Activated T-helper 1 cell treated with anti-CD3 and anti-CD28 coated beads, Interleukin-12 subunit alpha, Interleukin-12 subunit beta, Interleukin-2, Interleukin-4 antibody, amounts not matched to agents 30 ng/mL and 10 ng/mL and 1 ng/mL, durations not matched to agents 14 hours and 24 hours and 36 hours (primary cell): ENCODE measurements at regions of chr15 and their contacts with region 1.

Region 1: GRCh38 chr15:50613600-50613999 is 67.1 kb upstream of the USP50 start:
- DNase-seq: no peak
- H3K4me3 Mint-ChIP-seq: no peak overlapping the region
- H3K27ac Mint-ChIP-seq: no peak overlapping the region
- H3K4me1 Mint-ChIP-seq: no peaks in the 10 kb centered on the region
- H3K27me3 Mint-ChIP-seq: no peaks in the 10 kb centered on the region

Region 2: DNA sequence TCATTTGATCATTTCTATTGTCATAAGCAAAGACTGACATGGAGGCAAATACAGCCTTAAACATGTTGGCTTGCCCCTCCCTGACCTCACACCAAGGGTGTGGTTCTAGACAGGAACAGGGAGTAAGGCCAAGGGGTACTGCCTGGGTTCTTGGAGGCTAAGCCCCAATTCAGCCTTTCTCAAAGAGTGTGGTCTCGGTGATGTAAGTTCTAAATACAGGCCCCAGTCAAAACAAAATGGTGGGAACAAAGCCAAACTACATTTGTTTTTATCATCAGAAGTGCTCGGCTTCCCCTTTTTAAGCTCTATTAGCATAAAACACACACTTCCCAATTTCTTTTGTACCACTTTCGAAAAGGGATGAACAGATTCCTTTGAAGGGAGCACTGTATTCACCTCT is 624.1 kb before region 1 on chr15:
- intact Hi-C with region 1: no loop called
- DNase-seq: no peak
- H3K4me3 Mint-ChIP-seq: no peak overlapping the region
- H3K27ac Mint-ChIP-seq: no peak overlapping the region
- H3K4me1 Mint-ChIP-seq: no peaks in the 10 kb centered on the region
- H3K27me3 Mint-ChIP-seq: peaks cover under 1% of the 10 kb centered on the region

Region 3: DNA sequence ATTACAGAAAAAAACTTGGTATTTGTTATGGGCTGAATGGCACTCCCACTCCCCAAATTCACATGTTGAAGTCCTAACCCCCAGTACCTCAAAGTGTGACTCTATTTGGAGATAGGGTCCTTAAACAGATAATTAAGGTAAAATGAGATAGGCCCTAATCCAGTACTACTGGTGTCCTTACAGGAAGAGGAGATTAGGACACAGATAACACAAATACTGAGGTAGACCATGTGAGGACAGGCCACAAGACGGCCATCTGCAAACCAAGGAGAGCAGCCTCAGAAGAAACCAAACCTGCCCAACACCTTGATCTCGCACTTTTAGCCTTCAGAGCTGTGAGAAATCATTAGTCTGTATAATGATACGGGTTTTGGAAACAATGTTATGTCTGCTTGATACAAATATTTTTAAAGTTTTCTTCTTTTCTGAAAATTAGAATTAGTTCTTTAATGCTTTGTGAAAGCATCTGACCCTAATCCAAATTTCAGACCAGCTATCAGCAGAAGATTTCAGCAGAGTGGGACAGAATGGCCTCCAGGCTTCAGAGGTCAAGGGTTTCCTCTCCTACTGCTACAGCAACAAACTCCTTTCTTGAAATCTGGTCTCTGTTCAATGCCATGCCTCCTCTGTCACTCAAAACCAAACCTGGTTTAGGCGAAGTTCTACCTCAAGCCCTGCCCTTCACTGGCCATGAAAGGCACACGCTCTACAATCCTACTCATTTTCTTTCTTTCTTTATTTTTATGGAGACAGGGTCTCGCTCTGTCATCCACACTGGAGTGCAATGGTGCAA is 326.1 kb before region 1 on chr15:
- intact Hi-C with region 1: no loop called
- DNase-seq: no peak
- H3K4me3 Mint-ChIP-seq: no peak overlapping the region
- H3K27ac Mint-ChIP-seq: peak overlapping the region; percentile 4
- H3K4me1 Mint-ChIP-seq: peaks cover 12% of the 10 kb centered on the region
- H3K27me3 Mint-ChIP-seq: no peaks in the 10 kb centered on the region

Region 4: GRCh38 chr15:50496692-50497091 is 116.9 kb before region 1 on chr15:
- intact Hi-C with region 1: loop called (anchors 10 kb)
- DNase-seq: no peak
- H3K4me3 Mint-ChIP-seq: no peak overlapping the region
- H3K27ac Mint-ChIP-seq: no peak overlapping the region
- H3K4me1 Mint-ChIP-seq: no peaks in the 10 kb centered on the region
- H3K27me3 Mint-ChIP-seq: no peaks in the 10 kb centered on the region

Region 5: DNA sequence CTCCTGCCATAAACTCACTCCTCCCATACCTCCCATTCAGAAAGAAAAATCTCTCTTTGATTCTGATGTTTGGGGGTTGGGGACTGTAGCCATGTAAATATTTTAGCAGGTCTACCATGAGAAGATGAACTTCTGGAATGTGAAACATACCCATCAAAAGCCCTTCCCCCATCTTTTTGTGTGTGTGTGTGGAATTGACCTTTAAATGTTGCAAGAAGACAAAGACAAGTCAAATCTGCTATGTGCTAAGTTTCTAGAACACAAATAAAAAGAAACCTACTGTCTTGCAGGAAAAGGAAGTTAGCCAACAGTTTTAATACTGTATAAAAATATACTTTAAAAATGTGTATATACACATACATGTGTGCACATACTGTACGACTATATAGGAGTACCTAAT is 37.4 kb before region 1 on chr15:
- intact Hi-C with region 1: loop called (anchors 5 kb)
- DNase-seq: no peak
- H3K4me3 Mint-ChIP-seq: no peak overlapping the region
- H3K27ac Mint-ChIP-seq: no peak overlapping the region
- H3K4me1 Mint-ChIP-seq: peaks cover 10% of the 10 kb centered on the region
- H3K27me3 Mint-ChIP-seq: no peaks in the 10 kb centered on the region